ENCODE measurements at regions of chr10 and their contacts with region 1.

Region 1: GRCh38 chr10:77943121-77943901 is 16.8 kb upstream of the DLG5 start:
- DNase-seq: peak; percentile 88

Region 2: DNA sequence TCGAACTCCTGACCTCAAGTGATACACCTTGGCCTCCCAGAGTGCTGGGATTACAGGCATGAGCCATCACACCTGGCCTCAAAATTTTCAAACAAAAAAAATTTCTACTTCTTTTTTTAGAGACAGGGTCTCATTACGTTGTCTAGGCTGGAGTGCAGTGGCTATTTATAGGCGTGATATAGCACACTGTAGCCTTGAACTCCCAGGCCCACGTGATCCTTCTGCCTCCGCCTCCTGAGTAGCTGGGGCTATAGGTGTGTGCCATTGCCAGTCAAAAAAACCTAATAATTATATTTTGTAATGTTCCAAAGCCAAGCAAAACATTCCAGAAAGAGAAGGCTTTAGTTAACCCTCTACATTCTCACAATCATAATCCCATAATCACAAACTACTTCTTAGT is 72.2 kb after region 1 on chr10:
- in situ Hi-C with region 1: loop called (anchors 10 kb)
- DNase-seq: no peak

Region 3: DNA sequence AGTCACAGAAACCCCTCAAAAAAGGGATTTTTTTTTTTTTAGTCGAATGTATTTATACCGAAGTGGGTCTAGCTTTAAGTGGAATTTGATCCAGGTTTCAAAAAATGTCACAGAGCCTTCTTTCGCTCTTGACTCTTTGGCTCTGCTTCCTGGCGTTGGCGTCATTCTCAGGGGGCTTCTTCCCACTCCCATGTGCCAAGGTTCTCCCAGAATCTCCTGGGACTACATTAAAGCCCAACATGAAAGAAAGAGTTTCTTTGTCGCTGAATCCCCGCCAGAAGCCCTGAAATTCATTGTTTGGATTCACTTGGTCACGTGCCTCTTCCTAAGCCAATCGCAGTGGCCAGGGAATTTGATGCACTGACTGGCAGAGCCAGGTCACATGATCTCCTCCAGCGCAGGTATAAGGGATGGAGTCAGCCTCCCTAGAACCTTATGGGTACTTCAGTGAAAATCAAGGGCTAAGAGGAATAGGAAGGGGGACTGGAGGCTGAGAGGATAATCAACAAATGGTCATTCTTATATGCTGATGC is 191.5 kb after region 1 on chr10:
- in situ Hi-C with region 1: no loop called
- DNase-seq: no peak

Measured in Caki2 (cell line).